Caco-2 (cell line): ENCODE measurements at regions of chr6 and their contacts with region 1.

Region 1: DNA sequence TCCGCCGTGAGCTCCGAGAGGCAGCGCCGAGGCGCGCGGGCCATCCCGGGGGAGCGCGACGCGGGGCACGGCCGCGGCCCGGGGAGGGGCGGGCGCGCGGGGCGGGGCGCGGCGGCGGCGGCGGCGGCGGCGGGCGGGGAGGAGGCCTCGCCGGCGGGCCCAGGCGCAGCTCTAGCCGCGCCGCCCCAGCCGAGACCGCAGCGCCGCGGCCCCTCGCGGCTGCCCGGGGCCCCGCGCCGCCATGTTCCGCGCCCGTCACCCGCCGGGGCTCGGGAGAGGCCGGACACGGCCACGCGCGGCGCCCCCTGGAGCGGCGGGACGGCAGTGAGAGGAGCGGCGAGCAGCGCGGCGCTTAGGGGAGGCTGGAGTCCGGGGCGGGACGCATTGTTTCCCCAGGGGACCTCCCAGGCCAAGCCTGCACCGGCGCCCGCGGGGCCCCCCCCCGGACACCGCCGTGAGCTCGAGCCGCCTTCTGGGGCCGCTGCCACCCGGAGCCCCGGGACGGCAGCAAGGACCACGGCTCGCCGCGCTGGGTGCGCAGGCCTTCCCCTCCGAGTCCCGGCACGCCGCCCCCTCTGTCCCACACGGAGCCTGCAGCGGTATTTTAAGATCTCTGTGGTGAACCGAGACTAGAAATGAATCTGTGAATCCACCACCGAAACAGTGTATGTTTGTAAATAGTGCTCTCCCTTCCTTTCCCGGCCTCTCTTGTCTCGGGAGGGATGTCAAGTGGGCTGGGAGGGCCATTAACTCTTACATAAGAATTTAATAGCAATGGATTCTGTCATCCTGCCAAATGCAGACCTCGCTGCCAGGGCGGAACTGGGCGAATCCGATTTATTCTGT is at the start of gene KIF13A:
- DNase-seq: peak; percentile 45 to 74
- H3K4me3 ChIP-seq: peak within 1 kb of the TSS; percentile 60
- H3K4me3 Mint-ChIP-seq: peak within 1 kb of the TSS; percentile 86
- H3K27ac Mint-ChIP-seq: peak within 1 kb of the TSS; percentile 74
- H3K4me1 ChIP-seq: 0 out of 2 replicates have a peak, but pooled peaks cover 5% of the 10 kb centered on the region
- H3K4me1 Mint-ChIP-seq: no peaks in the 10 kb centered on the region
- H3K27me3 ChIP-seq: no peaks in the 10 kb centered on the region
- H3K27me3 Mint-ChIP-seq: no peaks in the 10 kb centered on the region
- CTCF ChIP-seq: peak in 1 of 2 experiments; percentile 9
- total RNA-seq, gene KIF13A: 13.8 and 14.0 TPM in 2 replicates

Region 2: GRCh38 chr6:17865798-17866725 is 121.7 kb before region 1 on chr6:
- CTCF ChIA-PET with region 1: no interaction called
- POLR2A ChIA-PET with region 1: no interaction called
- intact Hi-C with region 1: loop called (anchors 5 kb)
- DNase-seq: peak in 1 of 2 experiments; percentile 35
- H3K4me3 ChIP-seq: no peak overlapping the region
- H3K4me3 Mint-ChIP-seq: no peak overlapping the region
- H3K27ac Mint-ChIP-seq: peak overlapping the region; percentile 12
- H3K4me1 ChIP-seq: peaks cover 10% of the 10 kb centered on the region; the same call in 1 of the 2 replicates
- H3K4me1 Mint-ChIP-seq: peaks cover 5% of the 10 kb centered on the region
- H3K27me3 ChIP-seq: no peaks in the 10 kb centered on the region
- H3K27me3 Mint-ChIP-seq: no peaks in the 10 kb centered on the region
- CTCF ChIP-seq: no peak

Region 3: DNA sequence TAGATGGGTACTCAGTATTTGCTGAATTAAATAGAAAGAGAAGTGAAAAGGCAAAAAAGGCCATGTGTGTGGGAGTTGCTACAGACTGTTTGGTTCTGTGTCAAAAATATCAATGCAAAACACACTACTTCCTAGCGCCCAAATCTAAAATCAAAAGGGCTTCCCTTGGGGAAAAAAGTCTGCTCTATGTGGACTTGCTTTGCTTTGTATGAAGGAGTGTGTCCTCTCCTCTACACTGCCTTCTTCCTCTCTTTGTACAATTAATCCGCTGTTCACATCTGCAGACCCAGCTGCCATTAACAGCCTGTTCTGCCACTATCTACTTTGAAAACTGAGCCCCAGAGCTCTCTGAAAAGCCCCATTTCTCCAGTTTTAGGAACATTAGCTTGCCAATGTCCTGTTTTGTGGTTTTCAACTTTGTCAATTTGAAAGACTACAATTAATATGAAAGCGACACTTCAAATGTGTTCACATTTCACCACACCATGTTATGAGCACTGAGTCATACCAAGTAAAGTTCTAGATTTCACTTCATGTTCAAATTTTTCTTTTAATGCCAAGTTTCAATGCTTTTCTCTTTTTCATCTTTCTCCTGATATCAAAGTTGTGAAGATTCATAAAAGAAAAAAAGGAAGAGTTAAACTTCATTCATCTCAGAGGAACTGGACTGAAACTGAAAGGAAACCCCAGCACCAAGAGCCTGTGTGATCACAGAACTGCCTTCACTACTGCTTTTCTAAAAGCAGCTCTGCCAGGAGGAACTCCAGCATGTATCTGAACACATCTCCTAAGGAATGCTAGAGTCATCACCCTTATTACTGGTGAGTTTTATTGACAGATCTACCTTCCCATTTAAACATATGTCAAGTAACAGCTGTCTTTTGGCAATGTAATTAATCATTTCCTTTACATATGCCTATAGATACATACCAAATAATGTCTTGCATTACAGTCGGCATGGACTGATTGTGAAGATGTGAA is 103.0 kb before region 1 on chr6:
- CTCF ChIA-PET with region 1: no interaction called
- POLR2A ChIA-PET with region 1: no interaction called
- intact Hi-C with region 1: no loop called
- DNase-seq: no peak
- H3K4me3 ChIP-seq: no peak overlapping the region
- H3K4me3 Mint-ChIP-seq: no peak overlapping the region
- H3K27ac Mint-ChIP-seq: no peak overlapping the region
- H3K4me1 ChIP-seq: no peaks in the 10 kb centered on the region; the same call in 1 of the 2 replicates
- H3K4me1 Mint-ChIP-seq: peaks cover 7% of the 10 kb centered on the region
- H3K27me3 ChIP-seq: no peaks in the 10 kb centered on the region
- H3K27me3 Mint-ChIP-seq: no peaks in the 10 kb centered on the region
- CTCF ChIP-seq: no peak

Region 4: GRCh38 chr6:17962436-17963031 is 25.3 kb before region 1 on chr6:
- CTCF ChIA-PET with region 1: no interaction called
- POLR2A ChIA-PET with region 1: no interaction called
- intact Hi-C with region 1: no loop called
- DNase-seq: no peak
- H3K4me3 ChIP-seq: no peak overlapping the region
- H3K4me3 Mint-ChIP-seq: no peak overlapping the region
- H3K27ac Mint-ChIP-seq: no peak overlapping the region
- H3K4me1 ChIP-seq: no peaks in the 10 kb centered on the region
- H3K4me1 Mint-ChIP-seq: no peaks in the 10 kb centered on the region
- H3K27me3 ChIP-seq: no peaks in the 10 kb centered on the region
- H3K27me3 Mint-ChIP-seq: no peaks in the 10 kb centered on the region
- CTCF ChIP-seq: no peak

Region 5: GRCh38 chr6:18022398-18023231 is 34.8 kb after region 1 on chr6:
- CTCF ChIA-PET with region 1: no interaction called
- POLR2A ChIA-PET with region 1: no interaction called
- intact Hi-C with region 1: loop called (anchors 2 kb)
- DNase-seq: peak; percentile 57 to 58
- H3K4me3 ChIP-seq: peak overlapping the region; percentile 14; the same call in 1 of the 2 replicates
- H3K4me3 Mint-ChIP-seq: peak overlapping the region; percentile 60
- H3K27ac Mint-ChIP-seq: peak overlapping the region; percentile 78
- H3K4me1 ChIP-seq: peaks cover 13% of the 10 kb centered on the region
- H3K4me1 Mint-ChIP-seq: peaks cover 13% of the 10 kb centered on the region
- H3K27me3 ChIP-seq: no peaks in the 10 kb centered on the region
- H3K27me3 Mint-ChIP-seq: no peaks in the 10 kb centered on the region
- CTCF ChIP-seq: no peak

Region 6: GRCh38 chr6:18053078-18053477 is 65.3 kb after region 1 on chr6:
- CTCF ChIA-PET with region 1: no interaction called
- POLR2A ChIA-PET with region 1: no interaction called
- intact Hi-C with region 1: no loop called
- DNase-seq: no peak
- H3K4me3 ChIP-seq: no peak overlapping the region
- H3K4me3 Mint-ChIP-seq: no peak overlapping the region
- H3K27ac Mint-ChIP-seq: no peak overlapping the region
- H3K4me1 ChIP-seq: peaks cover 29% of the 10 kb centered on the region
- H3K4me1 Mint-ChIP-seq: peaks cover 21% of the 10 kb centered on the region
- H3K27me3 ChIP-seq: no peaks in the 10 kb centered on the region
- H3K27me3 Mint-ChIP-seq: no peaks in the 10 kb centered on the region
- CTCF ChIP-seq: no peak

Region 7: GRCh38 chr6:18323935-18324705 is 336.3 kb after region 1 on chr6:
- CTCF ChIA-PET with region 1: no interaction called
- POLR2A ChIA-PET with region 1: no interaction called
- intact Hi-C with region 1: no loop called
- DNase-seq: peak in 1 of 2 experiments; percentile 33
- H3K4me3 ChIP-seq: no peak overlapping the region
- H3K4me3 Mint-ChIP-seq: no peak overlapping the region
- H3K27ac Mint-ChIP-seq: no peak overlapping the region
- H3K4me1 ChIP-seq: no peaks in the 10 kb centered on the region
- H3K4me1 Mint-ChIP-seq: no peaks in the 10 kb centered on the region
- H3K27me3 ChIP-seq: no peaks in the 10 kb centered on the region
- H3K27me3 Mint-ChIP-seq: peaks cover 8% of the 10 kb centered on the region
- CTCF ChIP-seq: peak; percentile 66 to 68